Ascending aorta (tissue), 2 donors: ENCODE measurements at regions of chr1 and their contacts with region 1.

Region 1: GRCh38 chr1:42142894-42143675 is 10.1 kb upstream of the GUCA2B start:
- DNase-seq: no peak
- H3K4me3 ChIP-seq: no peak overlapping the region
- H3K27ac ChIP-seq: no peak overlapping the region
- H3K4me1 ChIP-seq: no peaks in the 10 kb centered on the region
- H3K27me3 ChIP-seq: peaks cover 9% of the 10 kb centered on the region
- CTCF ChIP-seq: no peak

Region 2: GRCh38 chr1:41851589-41851988 is 291.5 kb before region 1 on chr1:
- intact Hi-C with region 1: no loop called
- DNase-seq: no peak
- H3K4me3 ChIP-seq: no peak overlapping the region
- H3K27ac ChIP-seq: no peak overlapping the region
- H3K4me1 ChIP-seq: peaks cover 1 to 2% of the 10 kb centered on the region in 2 donors
- H3K27me3 ChIP-seq: no peaks in the 10 kb centered on the region
- CTCF ChIP-seq: no peak

Region 3: GRCh38 chr1:42756956-42757891 is 614.1 kb after region 1 on chr1:
- intact Hi-C with region 1: loop called (anchors 5 kb)
- DNase-seq: no peak
- H3K4me3 ChIP-seq: no peak overlapping the region
- H3K27ac ChIP-seq: no peak overlapping the region
- H3K4me1 ChIP-seq: no peaks in the 10 kb centered on the region
- H3K27me3 ChIP-seq: no peaks in the 10 kb centered on the region
- CTCF ChIP-seq: peak; percentile 48 to 58 (median 57)